Breast epithelium (tissue), 4 donors: ENCODE measurements at regions of chr20 and their contacts with region 1.

Region 1: DNA sequence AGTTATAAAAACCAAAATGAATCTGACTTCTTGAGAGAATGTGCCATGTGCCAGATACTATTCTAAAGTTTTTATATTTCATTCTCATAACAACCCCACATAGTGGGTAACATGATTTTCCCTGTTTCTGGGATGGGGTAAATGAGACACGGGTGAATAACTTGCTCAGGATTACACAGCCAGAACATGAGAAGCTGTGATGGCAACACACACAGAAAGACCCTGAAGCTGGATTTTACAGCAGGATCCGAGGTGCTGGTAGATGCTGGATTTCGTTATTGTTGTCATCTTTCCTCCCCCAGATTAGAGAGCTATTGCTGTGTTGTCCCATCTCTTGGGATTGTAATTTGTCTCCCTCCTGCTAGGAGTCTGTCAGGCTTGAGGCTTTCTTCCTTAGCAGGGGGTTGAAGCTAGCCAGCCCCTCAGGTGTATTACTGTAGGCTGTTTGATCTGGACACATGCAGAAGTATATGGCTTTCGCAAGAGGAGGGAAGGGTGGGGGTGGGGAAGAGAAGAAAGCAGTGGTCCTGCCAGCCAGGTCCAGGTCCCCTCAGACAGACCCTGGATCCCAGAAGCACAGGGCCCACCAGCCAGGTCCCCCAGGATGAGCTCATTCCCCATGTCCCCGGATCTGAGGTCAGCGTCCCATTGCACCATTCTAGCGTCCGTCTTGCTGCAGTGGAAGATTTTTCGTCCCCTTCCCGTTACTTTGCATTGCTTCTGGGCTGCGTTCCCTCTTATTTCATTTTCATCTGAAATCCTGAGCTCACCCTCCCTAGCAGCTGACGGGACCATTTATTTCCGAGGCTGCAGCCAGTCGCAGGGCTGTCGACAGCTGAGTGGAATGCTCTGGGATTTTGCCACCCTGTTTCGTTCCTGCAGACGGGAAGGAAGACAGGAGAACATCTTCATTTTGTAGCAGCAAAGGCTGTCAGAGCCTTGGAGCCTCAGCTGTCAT is 7.3 kb upstream of the KCNG1 start:
- DNase-seq: no peak
- H3K4me3 ChIP-seq: no peak overlapping the region
- H3K27ac ChIP-seq: no peak overlapping the region
- H3K4me1 ChIP-seq: no peaks in the 10 kb centered on the region
- H3K27me3 ChIP-seq: peaks cover 0 to 58% of the 10 kb centered on the region in 2 donors
- CTCF ChIP-seq: no peak
- POLR2A ChIP-seq: no peak

Region 2: DNA sequence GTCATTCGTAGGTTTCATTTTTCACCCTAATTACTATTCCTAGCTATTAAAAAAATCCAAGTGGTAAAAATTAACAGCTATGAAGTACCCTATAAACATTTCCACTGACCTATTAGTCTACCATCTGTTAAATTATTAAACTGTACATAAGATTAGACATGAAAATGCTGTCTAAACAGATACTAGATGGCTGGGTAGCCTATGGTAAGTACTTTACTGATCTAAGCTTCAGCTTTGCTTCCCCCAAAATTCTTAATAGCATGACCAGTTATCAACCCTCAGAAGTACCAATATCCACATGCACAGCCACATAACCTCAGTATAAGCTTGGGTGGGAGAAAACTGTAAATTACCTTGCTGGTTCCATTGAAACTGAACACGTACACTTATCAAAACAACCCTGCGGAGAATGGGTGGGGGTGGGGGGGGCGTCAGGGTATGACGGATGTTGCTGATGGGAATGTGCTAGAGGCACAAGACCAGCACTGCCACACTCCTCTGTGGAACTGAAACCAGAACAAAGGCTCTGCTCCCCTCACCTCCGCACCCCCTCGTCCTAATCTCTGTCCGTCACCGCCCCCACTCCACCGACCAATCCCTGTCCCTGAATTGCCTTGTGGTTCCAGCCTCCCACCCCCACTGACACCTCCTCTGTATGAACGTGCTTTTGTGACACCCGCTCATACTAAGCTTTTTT is 1361.9 kb before region 1 on chr20:
- intact Hi-C with region 1: loop called (anchors 10 kb)
- DNase-seq: no peak
- H3K4me3 ChIP-seq: no peak overlapping the region
- H3K27ac ChIP-seq: no peak overlapping the region
- H3K4me1 ChIP-seq: no peaks in the 10 kb centered on the region
- H3K27me3 ChIP-seq: no peaks in the 10 kb centered on the region
- CTCF ChIP-seq: no peak
- POLR2A ChIP-seq: no peak

Region 3: DNA sequence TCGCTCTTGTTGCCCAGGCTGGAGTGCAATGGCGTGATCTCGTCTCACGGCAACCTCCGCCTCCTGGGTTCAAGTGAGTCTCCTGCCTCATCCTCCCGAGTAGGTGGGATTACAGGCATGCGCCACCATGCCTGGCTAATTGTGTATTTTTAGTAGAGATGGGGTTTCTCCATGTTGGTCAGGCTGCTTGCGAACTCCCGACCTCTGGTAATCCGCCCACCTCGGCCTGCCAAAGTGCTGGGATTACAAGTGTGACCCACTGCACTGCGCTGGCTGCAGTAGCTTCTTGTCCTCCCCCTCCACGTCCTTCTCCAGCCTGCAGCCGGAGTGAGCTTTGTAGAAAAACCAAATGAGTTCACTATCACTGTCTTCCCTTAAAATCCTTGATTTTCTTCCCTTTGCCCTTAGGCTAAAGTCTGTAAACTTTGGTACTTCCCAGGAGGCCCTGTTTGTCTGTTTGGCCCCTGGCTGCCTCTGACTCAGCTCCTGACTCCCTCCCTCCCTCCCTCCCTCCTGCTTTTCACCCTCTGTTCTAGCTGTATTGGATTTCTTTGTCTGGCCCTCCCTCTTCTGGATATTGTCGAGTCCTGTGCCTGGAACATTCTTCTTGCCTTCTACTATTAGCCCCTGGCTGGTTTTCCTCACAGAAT is 286.0 kb before region 1 on chr20:
- intact Hi-C with region 1: no loop called
- DNase-seq: peak in 1 of 2 donors; percentile 78
- H3K4me3 ChIP-seq: peak overlapping the region in 1 of 3 donors; percentile 16
- H3K27ac ChIP-seq: peak overlapping the region; percentile 86 to 90
- H3K4me1 ChIP-seq: peaks cover 0 to 11% of the 10 kb centered on the region in 2 donors
- H3K27me3 ChIP-seq: no peaks in the 10 kb centered on the region
- CTCF ChIP-seq: no peak
- POLR2A ChIP-seq: no peak